ENCODE measurements at regions of chr4 and their contacts with region 1.

Region 1: DNA sequence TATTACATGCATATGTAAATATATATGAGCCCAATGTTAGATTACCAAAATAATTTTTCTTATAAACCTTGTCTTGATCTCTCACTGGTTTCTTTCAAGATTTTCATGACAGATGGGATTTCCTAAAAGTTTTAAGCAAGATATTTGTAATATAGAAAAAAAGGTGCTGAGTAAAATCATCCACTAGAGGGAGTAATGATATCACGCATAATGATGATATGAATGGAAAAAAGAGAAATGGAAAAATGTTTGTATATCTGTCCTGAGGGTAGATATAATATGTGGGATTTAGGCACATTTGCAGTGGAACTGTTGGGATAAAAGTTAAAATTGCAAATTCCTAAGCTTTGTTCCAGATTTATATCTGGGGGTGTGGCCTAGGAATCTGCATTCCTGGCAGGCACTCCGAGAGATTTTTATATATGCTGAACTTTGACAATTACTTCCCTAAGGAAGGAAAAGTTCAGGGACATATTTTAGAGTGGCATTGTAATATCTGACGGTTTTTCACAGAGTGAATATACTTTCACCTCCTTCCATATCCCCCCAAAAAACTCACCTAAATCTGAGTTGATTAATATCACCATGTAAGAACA is 60.5 kb downstream of the TMA16 start:
- DNase-seq: no peak

Region 2: DNA sequence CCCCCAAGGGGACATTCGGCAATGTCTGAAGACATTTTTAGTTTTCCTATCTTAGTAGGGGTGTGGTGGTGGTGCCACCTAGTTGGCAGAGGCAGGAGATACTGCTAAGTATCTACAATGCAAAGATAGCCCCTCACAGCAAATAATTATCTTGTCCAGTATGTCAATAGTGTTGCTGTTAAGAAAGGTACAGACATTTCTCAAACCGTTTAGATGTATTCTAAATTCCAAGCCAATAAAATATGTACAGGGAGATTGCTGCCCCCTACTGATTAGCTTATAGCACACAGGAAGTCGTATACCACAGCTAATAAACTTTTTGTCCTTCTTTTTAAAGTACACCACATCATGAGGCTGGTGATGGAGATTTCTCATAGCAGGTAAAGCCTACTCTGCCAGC is 200.0 kb after region 1 on chr4:
- intact Hi-C with region 1: loop called (anchors 1 kb)
- DNase-seq: no peak

Region 3: DNA sequence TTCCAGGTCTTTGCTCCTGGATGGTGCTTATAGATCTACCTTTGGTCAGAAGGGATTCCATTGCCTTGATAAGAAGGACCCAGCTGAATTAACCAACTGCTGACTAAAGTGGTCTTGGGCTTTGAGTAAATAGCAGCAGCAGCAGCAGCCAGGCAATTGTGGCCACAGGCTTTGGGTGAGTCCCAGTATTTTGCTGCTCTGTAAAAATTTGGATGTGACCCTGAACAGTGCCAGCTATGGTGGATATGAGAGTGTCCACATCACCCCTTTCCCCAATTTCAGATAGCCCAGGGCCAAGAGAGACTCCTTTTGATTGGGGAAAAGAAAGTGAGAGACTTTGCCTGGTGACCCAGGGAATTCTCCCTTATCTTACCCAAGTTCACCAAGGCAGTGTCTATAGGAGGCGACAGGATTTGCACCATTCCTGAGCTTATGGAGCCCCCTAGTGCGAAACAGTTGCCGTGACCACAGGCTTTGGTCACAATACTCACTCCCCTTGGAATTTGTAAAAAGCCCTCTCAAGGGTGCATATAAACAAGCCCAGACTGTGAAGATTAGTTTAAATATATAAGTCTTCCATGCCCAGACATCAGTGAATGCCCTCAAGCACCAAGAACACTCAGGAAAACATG is 457.5 kb after region 1 on chr4:
- intact Hi-C with region 1: loop called (anchors 2 kb)
- DNase-seq: peak in 3 of 10 donors; percentile 29 to 84 (median 47)

Region 4: DNA sequence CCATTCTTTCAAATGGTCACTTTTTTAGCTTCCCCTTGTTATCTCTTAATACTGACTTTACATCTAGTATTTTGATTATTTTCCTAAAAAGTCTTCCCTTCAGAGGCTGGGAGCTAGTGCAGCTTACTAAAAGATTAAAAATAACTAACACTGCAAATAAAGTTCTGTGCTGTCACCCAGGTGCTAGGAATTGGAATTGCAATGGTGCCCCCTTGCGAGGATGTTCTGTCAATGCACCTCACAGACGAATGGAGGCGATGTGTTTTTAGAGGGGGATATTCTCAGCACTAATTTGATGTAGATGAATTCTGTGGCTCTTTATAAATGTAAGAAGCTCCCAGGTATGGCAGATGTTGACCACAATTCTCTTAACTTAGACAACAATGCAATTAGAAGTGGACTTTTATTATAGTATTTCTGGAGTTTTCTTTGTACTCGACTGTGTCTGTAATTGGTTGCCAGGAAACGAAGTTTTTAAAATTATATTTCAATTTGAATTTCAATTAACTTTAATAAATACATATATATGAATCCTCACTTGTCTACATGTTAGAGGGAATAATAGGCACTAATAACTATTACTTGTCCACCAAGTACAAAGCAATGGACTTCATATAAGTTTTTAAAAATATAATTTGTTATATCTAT is 1177.0 kb after region 1 on chr4:
- intact Hi-C with region 1: loop called (anchors 5 kb)
- DNase-seq: peak; percentile 35 to 92 (median 66)